Testis (tissue), 5 donors: ENCODE measurements at regions of chr3 and their contacts with region 1.

Region 1: GRCh38 chr3:94069194-94069813 is 6.4 kb downstream of the NSUN3 start:
- DNase-seq: no peak
- H3K4me3 ChIP-seq: no peak overlapping the region
- H3K27ac ChIP-seq: no peak overlapping the region
- H3K4me1 ChIP-seq: peaks cover 10% of the 10 kb centered on the region
- H3K27me3 ChIP-seq: no peaks in the 10 kb centered on the region
- CTCF ChIP-seq: peak; percentile 18 to 70 (median 21)
- POLR2A ChIP-seq: no peak

Region 2: GRCh38 chr3:94004301-94004910 is 64.9 kb before region 1 on chr3:
- intact Hi-C with region 1: loop called (anchors 5 kb)
- DNase-seq: no peak
- H3K4me3 ChIP-seq: no peak overlapping the region
- H3K27ac ChIP-seq: no peak overlapping the region
- H3K4me1 ChIP-seq: peaks cover 7% of the 10 kb centered on the region
- H3K27me3 ChIP-seq: no peaks in the 10 kb centered on the region
- CTCF ChIP-seq: peak; percentile 35 to 77 (median 61)
- POLR2A ChIP-seq: no peak

Region 3: DNA sequence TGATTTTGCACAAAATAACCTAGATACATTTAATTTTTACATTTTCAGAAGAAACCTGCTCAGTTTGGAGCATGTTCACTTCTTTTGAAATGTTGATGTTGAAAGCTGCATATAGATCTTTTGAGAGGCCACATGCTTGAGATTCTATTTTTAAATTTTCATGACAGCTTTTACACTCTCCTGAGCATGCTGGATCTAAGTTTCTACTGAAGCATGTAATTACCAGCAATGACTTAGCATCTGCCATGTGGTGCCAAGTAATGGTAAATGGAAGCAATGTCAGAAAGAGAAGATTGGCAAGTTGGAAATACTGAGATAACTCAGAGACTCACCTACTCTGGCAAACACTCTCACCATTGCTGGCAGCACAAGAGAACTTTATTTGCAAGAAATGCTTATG is 304.2 kb after region 1 on chr3:
- intact Hi-C with region 1: no loop called
- DNase-seq: no peak
- H3K4me3 ChIP-seq: no peak overlapping the region
- H3K27ac ChIP-seq: no peak overlapping the region
- H3K4me1 ChIP-seq: no peaks in the 10 kb centered on the region
- H3K27me3 ChIP-seq: no peaks in the 10 kb centered on the region
- CTCF ChIP-seq: no peak
- POLR2A ChIP-seq: no peak

Region 4: DNA sequence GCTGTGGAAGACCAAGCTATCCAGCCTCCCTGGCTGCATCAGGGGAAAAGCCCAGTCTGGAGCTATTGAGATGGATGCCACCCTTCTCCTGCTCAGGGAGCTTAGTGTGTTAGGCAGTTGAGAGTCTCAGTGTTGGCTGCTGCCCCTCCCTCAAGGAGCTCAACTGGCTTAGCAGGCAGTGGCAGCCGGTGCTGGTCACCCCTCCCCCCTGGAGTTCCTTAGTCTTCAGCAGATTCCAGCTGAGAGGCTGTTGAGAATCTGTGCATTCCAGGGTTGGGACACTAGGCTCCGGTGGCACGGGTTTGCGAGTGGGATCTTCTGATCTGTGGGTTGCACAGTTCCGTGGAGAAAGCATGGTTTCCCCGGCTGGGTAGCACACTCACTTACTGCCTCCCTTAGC is 877.4 kb after region 1 on chr3:
- intact Hi-C with region 1: no loop called
- DNase-seq: no peak
- H3K4me3 ChIP-seq: no peak overlapping the region
- H3K27ac ChIP-seq: no peak overlapping the region
- H3K4me1 ChIP-seq: no peaks in the 10 kb centered on the region
- H3K27me3 ChIP-seq: no peaks in the 10 kb centered on the region
- CTCF ChIP-seq: no peak
- POLR2A ChIP-seq: no peak